ENCODE measurements at regions of chr12 and their contacts with region 1.

Region 1: DNA sequence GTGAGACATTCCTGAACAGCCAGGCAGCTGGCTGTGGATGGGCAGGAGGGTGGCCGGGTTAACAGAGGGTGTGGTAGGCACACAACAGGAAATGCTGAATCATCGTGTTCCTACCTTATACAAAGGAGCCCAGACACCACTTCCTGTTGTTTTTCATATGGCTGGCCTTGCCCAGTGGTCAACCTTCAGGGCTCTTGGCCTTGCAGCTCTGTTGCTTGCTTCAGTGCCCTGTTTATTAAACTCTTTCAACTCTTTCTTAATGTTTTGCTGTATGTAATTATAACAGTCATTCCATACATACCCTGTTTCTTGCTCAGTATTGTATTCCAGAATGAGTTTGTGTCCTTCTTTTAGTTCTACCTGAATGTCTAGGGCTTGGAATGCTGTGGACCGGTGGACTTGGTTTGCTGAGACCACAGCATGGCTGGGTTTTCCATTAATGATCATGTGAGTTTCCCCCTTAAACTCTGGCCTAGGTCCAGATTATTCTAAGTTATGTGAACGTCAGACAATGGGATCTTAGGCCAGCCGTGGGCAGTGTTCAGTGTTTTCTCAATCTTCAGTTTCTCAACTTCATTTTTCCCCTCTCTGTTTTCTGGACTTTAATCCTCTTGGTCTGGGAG is 11.9 kb downstream of the CFAP54 start:
- DNase-seq: peak; percentile 27 to 70 (median 38)
- ATAC-seq: peak in 3 of 4 donors; percentile 89 to 94 (median 91)
- H3K4me3 ChIP-seq: no peak overlapping the region
- H3K27ac ChIP-seq: peak overlapping the region; percentile 37 to 91 (median 76)
- H3K4me1 ChIP-seq: peaks cover 0 to 33% (median 13%) of the 10 kb centered on the region in 12 donors
- H3K27me3 ChIP-seq: no peaks in the 10 kb centered on the region
- CTCF ChIP-seq: no peak
- POLR2A ChIP-seq: no peak

Region 2: GRCh38 chr12:96061864-96062453 is 439.3 kb before region 1 on chr12:
- intact Hi-C with region 1: loop called in 3 of 10 experiments (anchors 5 kb)
- DNase-seq: peak; percentile 61 to 74 (median 71)
- ATAC-seq: peak; percentile 55 to 92 (median 86)
- H3K4me3 ChIP-seq: no peak overlapping the region
- H3K27ac ChIP-seq: peak overlapping the region in 2 of 12 donors; percentile 7 to 39
- H3K4me1 ChIP-seq: peaks cover 0 to 27% (median 3%) of the 10 kb centered on the region in 12 donors
- H3K27me3 ChIP-seq: no peaks in the 10 kb centered on the region
- CTCF ChIP-seq: peak; percentile 73 to 93 (median 82)
- POLR2A ChIP-seq: no peak

Region 3: GRCh38 chr12:96194971-96195844 is 306.0 kb before region 1 on chr12:
- intact Hi-C with region 1: no loop called
- DNase-seq: peak; percentile 32 to 67 (median 46)
- ATAC-seq: peak in 2 of 4 donors; percentile 52 to 56
- H3K4me3 ChIP-seq: peak overlapping the region; percentile 58 to 98 (median 78)
- H3K27ac ChIP-seq: peak overlapping the region; percentile 74 to 95 (median 88)
- H3K4me1 ChIP-seq: peaks cover 3 to 58% (median 15%) of the 10 kb centered on the region in 12 donors
- H3K27me3 ChIP-seq: no peaks in the 10 kb centered on the region
- CTCF ChIP-seq: no peak
- POLR2A ChIP-seq: no peak

Region 4: DNA sequence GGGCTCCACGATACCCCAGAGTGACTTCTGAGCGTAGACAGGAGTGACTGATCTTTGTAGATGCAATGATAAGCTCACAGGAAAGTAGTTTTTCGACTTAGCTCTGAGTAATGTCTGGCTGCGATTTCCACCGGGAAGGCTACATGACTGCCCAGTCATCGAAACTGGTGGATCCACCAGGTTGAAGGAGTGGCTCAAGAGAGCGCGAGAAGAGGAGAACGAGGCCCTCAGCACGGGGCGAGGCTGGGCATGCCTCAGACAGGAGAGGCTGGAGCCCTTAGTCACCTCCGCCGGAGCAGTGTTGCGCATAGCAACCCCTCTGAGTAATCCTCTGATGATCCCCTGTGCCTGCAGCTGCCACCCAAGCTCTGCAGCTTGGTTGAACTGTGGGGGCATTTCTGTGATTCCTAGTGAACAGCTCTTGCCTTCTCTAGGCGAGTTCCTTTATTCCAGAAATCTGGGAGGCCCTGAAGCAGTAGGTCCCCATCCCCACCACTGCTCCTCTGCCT is 281.5 kb before region 1 on chr12:
- intact Hi-C with region 1: loop called in 1 of 10 experiments (anchors 5 kb)
- DNase-seq: no peak
- ATAC-seq: peak in 2 of 4 donors; percentile 26 to 37
- H3K4me3 ChIP-seq: no peak overlapping the region
- H3K27ac ChIP-seq: peak overlapping the region in 6 of 12 donors; percentile 18 to 47 (median 34)
- H3K4me1 ChIP-seq: peaks cover 0 to 87% (median 54%) of the 10 kb centered on the region in 12 donors
- H3K27me3 ChIP-seq: no peaks in the 10 kb centered on the region
- CTCF ChIP-seq: no peak
- POLR2A ChIP-seq: no peak

Region 5: DNA sequence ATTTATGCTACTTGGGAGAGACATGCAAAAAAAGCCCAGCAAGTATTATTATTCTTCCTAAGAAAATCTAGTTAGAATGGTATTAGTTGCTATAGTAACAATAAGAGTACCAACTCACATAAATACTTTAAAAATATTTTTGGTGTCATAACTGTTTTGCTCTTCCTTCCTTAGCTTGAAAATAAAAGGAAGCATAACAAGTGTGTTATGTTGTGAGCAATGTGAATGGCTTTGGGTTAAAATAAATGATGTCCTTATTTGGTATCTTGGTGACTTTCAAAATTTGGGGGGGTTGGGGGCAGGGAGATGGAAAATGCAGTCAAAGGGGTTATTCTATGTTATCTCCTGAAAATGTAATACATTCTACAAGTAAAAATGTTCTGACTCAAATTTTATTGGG is 216.1 kb before region 1 on chr12:
- intact Hi-C with region 1: loop called in 1 of 10 experiments (anchors 10 kb)
- DNase-seq: no peak
- ATAC-seq: no peak
- H3K4me3 ChIP-seq: no peak overlapping the region
- H3K27ac ChIP-seq: no peak overlapping the region
- H3K4me1 ChIP-seq: no peaks in the 10 kb centered on the region
- H3K27me3 ChIP-seq: no peaks in the 10 kb centered on the region
- CTCF ChIP-seq: no peak
- POLR2A ChIP-seq: no peak

Region 6: GRCh38 chr12:96303653-96304052 is 197.6 kb before region 1 on chr12:
- intact Hi-C with region 1: loop called in 3 of 10 experiments (anchors 10 kb)
- DNase-seq: no peak
- ATAC-seq: peak in 1 of 4 donors; percentile 64
- H3K4me3 ChIP-seq: no peak overlapping the region
- H3K27ac ChIP-seq: no peak overlapping the region
- H3K4me1 ChIP-seq: peaks cover 0 to 17% (median 0%) of the 10 kb centered on the region in 12 donors
- H3K27me3 ChIP-seq: no peaks in the 10 kb centered on the region
- CTCF ChIP-seq: peak in 3 of 12 donors; percentile 11 to 40 (median 23)
- POLR2A ChIP-seq: no peak

Region 7: DNA sequence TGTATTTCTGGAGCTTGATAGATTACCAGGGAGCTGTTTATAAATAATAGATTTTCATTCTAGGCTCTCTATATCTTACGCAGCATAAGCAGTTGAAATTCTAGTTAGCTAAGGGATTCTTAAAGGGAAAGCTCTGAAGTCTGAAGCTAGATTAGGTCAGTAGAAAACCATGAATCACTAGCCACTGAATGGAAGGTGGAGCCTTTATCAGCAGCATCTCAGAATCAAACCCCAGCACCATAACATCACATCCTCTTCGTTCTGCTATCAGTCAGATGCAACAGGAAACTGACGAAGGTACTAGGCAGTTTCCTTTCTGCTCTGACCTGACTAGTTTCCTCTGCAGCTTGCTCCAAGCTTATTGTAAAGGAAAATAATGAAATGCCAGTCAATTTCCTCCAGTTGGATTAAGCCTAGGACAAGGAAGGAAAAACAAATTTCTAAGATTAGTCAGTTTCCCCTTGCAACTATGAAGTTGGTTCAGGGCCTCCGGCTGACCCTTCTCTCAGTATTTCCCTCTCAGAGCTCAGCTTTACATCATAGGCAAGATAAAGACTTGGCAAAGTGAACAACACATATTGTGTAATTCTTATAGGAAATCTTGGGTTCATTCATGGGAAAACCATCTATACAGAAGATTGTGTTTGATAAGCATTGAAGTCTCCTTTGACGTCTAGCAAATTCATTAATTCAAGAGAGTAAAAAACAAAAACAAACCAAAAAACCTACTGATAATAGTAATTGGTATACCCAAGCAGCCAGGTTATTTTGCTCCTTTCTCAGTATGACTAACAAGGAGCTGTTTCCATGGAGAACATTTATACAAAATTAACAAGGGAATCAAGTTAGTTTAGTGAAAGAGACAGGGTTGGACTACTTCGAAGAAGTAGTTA is 55.3 kb before region 1 on chr12:
- intact Hi-C with region 1: loop called in 1 of 10 experiments (anchors 5 kb)
- DNase-seq: peak in 2 of 5 donors; percentile 38 to 52
- ATAC-seq: peak; percentile 91 to 96 (median 93)
- H3K4me3 ChIP-seq: peak overlapping the region in 1 of 12 donors; percentile 4
- H3K27ac ChIP-seq: peak overlapping the region; percentile 66 to 91 (median 84)
- H3K4me1 ChIP-seq: peaks cover 0 to 26% (median 9%) of the 10 kb centered on the region in 12 donors
- H3K27me3 ChIP-seq: no peaks in the 10 kb centered on the region
- CTCF ChIP-seq: no peak
- POLR2A ChIP-seq: no peak